Endothelial cell of umbilical vein (primary cell): ENCODE measurements at regions of chr6 and their contacts with region 1.

Region 1: GRCh38 chr6:105402939-105403935 is at the start of gene PREP:
- DNase-seq: peak; percentile 85
- H3K4me3 ChIP-seq: peak within 1 kb of the TSS; percentile 81 to 97 (median 84)
- H3K27ac ChIP-seq: peak within 1 kb of the TSS; percentile 62
- H3K4me1 ChIP-seq: peaks cover 6% of the 10 kb centered on the region
- H3K27me3 ChIP-seq: no peaks in the 10 kb centered on the region
- CTCF ChIP-seq: peak; percentile 68 to 74
- POLR2A ChIP-seq: peak; percentile 64
- total RNA-seq, gene PREP: 37.7 and 40.7 TPM in 2 replicates

Region 2: DNA sequence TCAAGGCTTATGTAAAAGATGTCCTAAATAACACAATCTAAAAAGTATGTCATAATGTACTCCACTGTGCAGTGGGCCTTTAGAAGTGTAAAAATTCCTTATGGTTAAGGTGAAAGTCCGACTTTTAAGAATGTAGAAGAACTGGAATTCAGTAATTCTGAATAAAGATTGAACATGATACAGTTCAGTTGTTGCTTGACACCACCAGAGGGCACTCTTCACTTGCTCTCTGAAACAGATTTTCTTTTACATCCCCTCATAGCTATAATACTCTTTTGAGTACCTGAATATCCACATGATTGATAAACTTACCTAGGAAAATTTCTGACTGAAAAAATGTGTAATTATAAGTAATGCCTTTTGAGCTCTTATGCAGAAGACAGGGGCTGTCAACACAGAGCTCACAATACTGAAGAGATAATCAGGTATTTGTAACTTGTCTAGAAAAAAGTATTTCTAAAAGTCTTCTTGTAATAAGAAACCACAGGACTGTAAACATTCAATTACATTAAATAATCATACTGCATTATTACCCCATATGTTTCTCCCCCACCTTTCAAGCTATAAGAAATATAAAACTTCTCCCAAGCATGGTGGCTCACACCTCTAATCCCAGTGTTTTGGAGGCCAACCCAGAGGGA is 315.5 kb before region 1 on chr6:
- CTCF ChIA-PET with region 1: interaction called, 116 read pairs
- POLR2A ChIA-PET with region 1: no interaction called
- dilution Hi-C with region 1: loop called (anchors 25 kb)
- intact Hi-C with region 1: loop called (anchors 1 kb)
- DNase-seq: peak; percentile 54
- H3K4me3 ChIP-seq: no peak overlapping the region
- H3K27ac ChIP-seq: no peak overlapping the region
- H3K4me1 ChIP-seq: no peaks in the 10 kb centered on the region
- H3K27me3 ChIP-seq: peaks cover 0 to 2% of the 10 kb centered on the region in 2 experiments
- CTCF ChIP-seq: peak; percentile 52 to 59
- POLR2A ChIP-seq: no peak

Region 3: DNA sequence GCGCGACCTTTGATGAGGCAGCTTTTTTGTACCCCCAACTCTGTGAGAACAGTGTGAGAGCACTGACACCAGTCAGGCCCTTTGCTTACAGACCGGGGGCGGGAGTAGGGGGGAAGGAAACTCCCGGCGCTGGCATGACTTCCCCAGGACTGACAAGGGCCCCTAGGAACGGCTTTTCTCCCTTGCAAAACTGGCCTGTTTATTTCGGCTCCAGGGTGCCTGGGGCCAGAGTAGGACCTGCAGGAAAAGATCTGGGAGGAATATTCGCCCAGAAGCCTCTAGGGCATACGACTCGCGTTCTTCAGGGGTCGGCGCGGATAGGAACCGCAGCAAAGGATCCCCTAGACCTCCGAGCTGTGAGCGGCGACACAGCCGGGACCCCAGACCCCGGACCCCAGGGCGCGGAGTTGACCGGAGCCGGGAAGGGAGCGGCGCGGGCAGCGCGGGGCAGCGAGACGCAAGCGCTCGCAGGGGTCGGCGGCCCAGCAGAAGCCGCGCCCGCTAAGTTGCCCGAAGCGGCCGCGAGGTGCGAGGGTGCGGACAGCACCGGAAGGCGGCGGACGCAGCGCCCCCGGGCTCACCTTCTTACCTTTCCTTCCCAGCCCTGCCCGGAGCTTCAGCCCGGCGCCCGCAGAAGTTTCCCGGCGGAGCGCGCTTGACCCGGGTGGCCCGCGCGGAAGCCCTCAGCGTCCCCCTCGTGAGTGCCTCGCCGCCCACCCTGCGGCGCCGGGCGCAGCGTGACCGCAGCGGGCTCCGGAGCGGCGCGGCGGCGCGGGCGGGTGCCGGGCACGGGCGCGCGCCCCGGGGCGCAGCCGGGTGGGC is 223.8 kb before region 1 on chr6 and contains the start of gene POPDC3:
- CTCF ChIA-PET with region 1: no interaction called
- POLR2A ChIA-PET with region 1: no interaction called
- dilution Hi-C with region 1: no loop called
- intact Hi-C with region 1: loop called (anchors 2 kb)
- DNase-seq: no peak
- H3K4me3 ChIP-seq: peak within 1 kb of the TSS; percentile 41 to 42 (median 41)
- H3K27ac ChIP-seq: no peak within 1 kb of the TSS
- H3K4me1 ChIP-seq: peaks cover 15% of the 10 kb centered on the region
- H3K27me3 ChIP-seq: peaks cover 0 to 2% of the 10 kb centered on the region in 2 experiments
- CTCF ChIP-seq: peak in 1 of 2 donors; percentile 1
- POLR2A ChIP-seq: no peak
- total RNA-seq, gene POPDC3: 1.7 and 3.1 TPM in 2 replicates

Region 4: DNA sequence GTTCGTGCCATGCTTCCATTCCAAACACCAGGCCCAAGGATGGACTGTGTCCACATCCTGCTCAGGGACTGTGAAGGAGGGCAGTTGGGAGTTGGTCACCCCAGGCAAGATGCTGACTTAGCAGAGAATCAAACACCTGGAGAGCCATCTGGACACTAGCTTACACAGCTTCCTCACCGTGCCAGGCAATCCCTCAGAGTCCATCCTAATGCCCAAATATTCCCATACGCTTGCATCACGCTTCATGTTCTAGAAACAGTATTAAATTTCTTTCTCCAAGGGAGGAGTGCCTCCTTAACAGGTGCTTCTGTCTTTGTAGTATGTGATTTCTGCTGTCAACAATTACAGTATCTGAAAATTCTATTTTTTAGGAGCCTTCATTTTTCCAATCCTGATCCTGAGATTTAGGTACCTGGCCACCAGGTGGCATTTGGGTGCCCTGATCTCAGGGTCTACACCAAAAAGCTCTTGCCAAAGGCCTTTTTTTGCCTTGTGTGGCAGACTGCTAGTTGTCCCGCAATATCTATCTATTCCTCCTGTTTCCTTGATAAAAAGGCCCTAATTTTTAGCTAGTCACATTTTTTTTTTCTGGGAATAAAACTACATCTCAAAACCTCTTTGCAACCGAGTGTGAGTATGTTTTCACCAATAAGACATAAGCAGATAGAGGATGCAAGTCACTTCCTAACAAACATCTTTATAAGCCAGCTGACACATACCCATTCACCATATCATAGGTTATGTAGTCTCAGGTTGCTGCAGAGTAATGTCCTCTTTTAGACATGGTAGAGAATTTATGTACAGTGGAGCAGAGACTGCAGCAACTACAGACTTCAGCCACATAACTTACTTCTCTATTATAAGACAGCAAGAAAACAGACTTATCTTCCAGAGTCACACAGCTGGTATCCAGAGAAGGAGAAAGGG is 85.4 kb before region 1 on chr6:
- CTCF ChIA-PET with region 1: interaction called, 11 read pairs
- POLR2A ChIA-PET with region 1: no interaction called
- dilution Hi-C with region 1: no loop called
- intact Hi-C with region 1: loop called (anchors 2 kb)
- DNase-seq: peak; percentile 2
- H3K4me3 ChIP-seq: no peak overlapping the region
- H3K27ac ChIP-seq: no peak overlapping the region
- H3K4me1 ChIP-seq: no peaks in the 10 kb centered on the region
- H3K27me3 ChIP-seq: no peaks in the 10 kb centered on the region
- CTCF ChIP-seq: peak; percentile 11 to 25
- POLR2A ChIP-seq: no peak

Region 5: DNA sequence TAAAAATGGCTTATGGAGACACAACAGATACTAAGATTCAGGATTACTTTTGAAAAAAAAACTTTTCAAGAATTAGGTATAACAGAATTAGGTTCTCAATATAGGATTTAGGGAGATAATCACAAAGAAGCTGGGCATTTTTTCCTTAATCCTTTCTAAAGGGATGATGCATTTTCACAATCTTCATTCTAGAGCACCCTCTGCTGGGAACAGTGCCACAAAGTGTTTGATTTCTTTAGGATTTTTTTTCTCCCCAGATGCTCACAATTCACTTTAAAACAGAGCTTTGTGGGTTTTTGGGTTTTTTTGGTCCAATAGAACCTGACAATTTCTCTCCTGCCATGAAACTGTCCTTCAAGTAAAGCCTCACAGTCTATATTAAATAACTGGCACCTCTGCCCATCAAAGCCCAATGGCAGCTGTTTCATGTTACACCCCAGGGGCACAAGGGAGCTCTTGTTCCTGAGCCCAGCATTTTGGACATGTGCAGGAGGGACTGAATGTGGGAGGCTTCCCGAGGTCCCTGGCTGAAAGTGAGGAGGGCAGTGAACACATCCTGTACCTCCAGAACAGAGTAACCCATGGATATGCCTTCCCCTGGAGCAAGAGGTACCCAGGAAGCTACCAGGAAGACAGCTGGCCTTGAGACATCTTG is 40.0 kb before region 1 on chr6:
- CTCF ChIA-PET with region 1: interaction called, 39 read pairs
- POLR2A ChIA-PET with region 1: no interaction called
- dilution Hi-C with region 1: no loop called
- intact Hi-C with region 1: loop called (anchors 1 kb)
- DNase-seq: peak; percentile 30
- H3K4me3 ChIP-seq: no peak overlapping the region
- H3K27ac ChIP-seq: no peak overlapping the region
- H3K4me1 ChIP-seq: peaks cover 20% of the 10 kb centered on the region
- H3K27me3 ChIP-seq: no peaks in the 10 kb centered on the region
- CTCF ChIP-seq: peak; percentile 23 to 29
- POLR2A ChIP-seq: no peak

Region 6: GRCh38 chr6:105382496-105382895 is 20.7 kb before region 1 on chr6:
- CTCF ChIA-PET with region 1: interaction called, 16 read pairs
- POLR2A ChIA-PET with region 1: no interaction called
- dilution Hi-C with region 1: no loop called
- intact Hi-C with region 1: loop called (anchors 2 kb)
- DNase-seq: peak; percentile 59
- H3K4me3 ChIP-seq: no peak overlapping the region
- H3K27ac ChIP-seq: peak overlapping the region; percentile 53
- H3K4me1 ChIP-seq: peaks cover 13% of the 10 kb centered on the region
- H3K27me3 ChIP-seq: no peaks in the 10 kb centered on the region
- CTCF ChIP-seq: no peak
- POLR2A ChIP-seq: no peak

Region 7: GRCh38 chr6:106173124-106173879 is 770.1 kb after region 1 on chr6:
- CTCF ChIA-PET with region 1: no interaction called
- POLR2A ChIA-PET with region 1: no interaction called
- dilution Hi-C with region 1: no loop called
- intact Hi-C with region 1: no loop called
- DNase-seq: no peak
- H3K4me3 ChIP-seq: no peak overlapping the region
- H3K27ac ChIP-seq: no peak overlapping the region
- H3K4me1 ChIP-seq: no peaks in the 10 kb centered on the region
- H3K27me3 ChIP-seq: no peaks in the 10 kb centered on the region
- CTCF ChIP-seq: no peak
- POLR2A ChIP-seq: no peak